ENCODE measurements at regions of chr19 and their contacts with region 1.

Region 1: DNA sequence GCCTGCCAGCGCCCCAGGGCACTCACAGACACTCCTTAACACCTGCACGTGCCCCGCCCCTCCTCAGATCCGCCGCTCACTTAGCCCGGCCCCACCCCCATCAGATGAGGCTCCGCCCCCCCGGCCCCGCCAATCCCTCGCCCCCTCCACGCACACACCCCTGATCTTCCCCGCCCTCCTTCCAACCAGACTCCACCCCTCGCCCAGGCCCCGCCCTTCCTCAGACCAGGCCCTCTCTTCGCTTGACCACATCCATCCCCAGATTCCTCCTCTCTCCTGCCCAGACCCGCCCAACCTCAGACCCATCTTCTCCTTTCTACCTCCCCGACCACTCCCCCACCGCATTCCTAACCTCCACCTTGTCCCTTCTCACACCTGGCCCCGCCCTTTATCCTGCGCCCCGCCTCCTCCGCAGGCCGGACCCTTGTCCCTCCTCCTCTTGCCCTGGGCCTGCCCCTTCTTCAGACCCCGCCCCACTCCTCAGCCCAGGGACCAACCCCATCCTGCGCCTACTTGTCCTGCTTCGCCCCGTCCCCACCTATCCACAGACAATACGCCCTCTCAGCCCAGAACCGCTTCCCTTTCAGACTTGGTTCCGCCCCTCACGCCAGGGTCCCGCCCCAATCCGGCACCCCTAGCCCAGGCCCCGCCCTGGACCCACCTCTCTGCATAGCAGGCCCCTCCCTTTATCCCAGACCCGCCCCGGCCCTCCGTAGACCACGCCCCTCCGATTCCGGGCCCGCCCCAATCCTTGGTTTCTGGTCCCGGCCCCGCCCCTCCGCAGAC is 452 bp upstream of the KLHL26 start:
- DNase-seq: peak; percentile 100
- H3K4me3 Mint-ChIP-seq: peak overlapping the region; percentile 81
- H3K27ac Mint-ChIP-seq: peak overlapping the region; percentile 57
- H3K4me1 Mint-ChIP-seq: peaks cover 23% of the 10 kb centered on the region
- H3K27me3 Mint-ChIP-seq: no peaks in the 10 kb centered on the region

Region 2: GRCh38 chr19:18571564-18572300 is 64.6 kb before region 1 on chr19 and contains the start of gene UBA52:
- CTCF ChIA-PET with region 1: no interaction called
- intact Hi-C with region 1: loop called (anchors 1 kb)
- DNase-seq: peak; percentile 99
- H3K4me3 Mint-ChIP-seq: peak within 1 kb of the TSS; percentile 90
- H3K27ac Mint-ChIP-seq: peak within 1 kb of the TSS; percentile 93
- H3K4me1 Mint-ChIP-seq: peaks cover 30% of the 10 kb centered on the region
- H3K27me3 Mint-ChIP-seq: no peaks in the 10 kb centered on the region
- total RNA-seq, gene UBA52: 1,997 to 2,122 TPM

Region 3: GRCh38 chr19:18683213-18683939 is 47.0 kb after region 1 on chr19 and contains the start of gene CRTC1:
- CTCF ChIA-PET with region 1: no interaction called
- intact Hi-C with region 1: loop called (anchors 2 kb)
- DNase-seq: peak; percentile 94
- H3K4me3 Mint-ChIP-seq: peak within 1 kb of the TSS; percentile 87
- H3K27ac Mint-ChIP-seq: peak within 1 kb of the TSS; percentile 84
- H3K4me1 Mint-ChIP-seq: peaks cover 18% of the 10 kb centered on the region
- H3K27me3 Mint-ChIP-seq: no peaks in the 10 kb centered on the region
- total RNA-seq, gene CRTC1: 4.0 to 4.2 TPM

Region 4: GRCh38 chr19:18700501-18701249 is 64.3 kb after region 1 on chr19:
- CTCF ChIA-PET with region 1: no interaction called
- intact Hi-C with region 1: loop called (anchors 1 kb)
- DNase-seq: peak; percentile 81
- H3K4me3 Mint-ChIP-seq: peak overlapping the region; percentile 53
- H3K27ac Mint-ChIP-seq: no peak overlapping the region
- H3K4me1 Mint-ChIP-seq: peaks cover 40% of the 10 kb centered on the region
- H3K27me3 Mint-ChIP-seq: no peaks in the 10 kb centered on the region

Region 5: DNA sequence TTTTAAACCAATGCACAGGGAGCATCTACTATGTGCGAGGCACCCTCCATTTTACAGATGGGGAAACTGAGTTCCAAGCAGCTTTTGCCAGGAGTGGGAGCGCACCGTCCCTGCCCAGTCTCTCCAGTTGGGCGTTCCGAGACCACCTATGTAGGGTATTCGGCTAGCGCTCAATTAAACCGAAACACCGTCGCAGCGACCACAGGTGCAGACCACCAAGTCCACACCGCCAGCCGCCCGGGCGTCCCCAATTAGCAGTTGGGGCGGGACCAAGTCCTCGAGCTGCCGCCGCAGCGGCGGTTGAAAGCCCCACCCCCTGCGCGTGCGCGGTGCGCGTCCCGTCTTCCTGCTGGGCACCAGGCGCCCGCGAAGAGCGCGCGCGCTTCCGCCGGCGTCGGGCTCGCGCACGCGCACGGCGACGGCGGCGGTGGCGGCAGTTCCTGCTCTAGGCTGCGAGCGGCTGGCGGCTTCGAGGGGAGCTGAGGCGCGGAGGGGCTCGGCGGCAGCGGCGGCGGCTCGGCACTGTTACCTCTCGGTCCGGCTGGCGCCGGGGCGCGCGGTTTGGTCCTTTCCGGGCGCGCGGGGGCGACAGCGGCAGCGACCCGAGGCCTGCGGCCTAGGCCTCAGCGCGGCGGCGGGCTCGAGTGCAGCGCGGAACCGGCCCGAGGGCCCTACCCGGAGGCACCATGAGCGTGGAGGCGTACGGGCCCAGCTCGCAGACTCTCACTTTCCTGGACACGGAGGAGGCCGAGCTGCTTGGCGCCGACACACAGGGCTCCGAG is 195.3 kb after region 1 on chr19 and contains the start of gene UPF1:
- CTCF ChIA-PET with region 1: no interaction called
- intact Hi-C with region 1: loop called (anchors 1 kb)
- DNase-seq: peak; percentile 96
- H3K4me3 Mint-ChIP-seq: peak within 1 kb of the TSS; percentile 97
- H3K27ac Mint-ChIP-seq: peak within 1 kb of the TSS; percentile 86
- H3K4me1 Mint-ChIP-seq: peaks cover 34% of the 10 kb centered on the region
- H3K27me3 Mint-ChIP-seq: no peaks in the 10 kb centered on the region
- total RNA-seq, gene UPF1: 95.0 to 105 TPM

Region 6: DNA sequence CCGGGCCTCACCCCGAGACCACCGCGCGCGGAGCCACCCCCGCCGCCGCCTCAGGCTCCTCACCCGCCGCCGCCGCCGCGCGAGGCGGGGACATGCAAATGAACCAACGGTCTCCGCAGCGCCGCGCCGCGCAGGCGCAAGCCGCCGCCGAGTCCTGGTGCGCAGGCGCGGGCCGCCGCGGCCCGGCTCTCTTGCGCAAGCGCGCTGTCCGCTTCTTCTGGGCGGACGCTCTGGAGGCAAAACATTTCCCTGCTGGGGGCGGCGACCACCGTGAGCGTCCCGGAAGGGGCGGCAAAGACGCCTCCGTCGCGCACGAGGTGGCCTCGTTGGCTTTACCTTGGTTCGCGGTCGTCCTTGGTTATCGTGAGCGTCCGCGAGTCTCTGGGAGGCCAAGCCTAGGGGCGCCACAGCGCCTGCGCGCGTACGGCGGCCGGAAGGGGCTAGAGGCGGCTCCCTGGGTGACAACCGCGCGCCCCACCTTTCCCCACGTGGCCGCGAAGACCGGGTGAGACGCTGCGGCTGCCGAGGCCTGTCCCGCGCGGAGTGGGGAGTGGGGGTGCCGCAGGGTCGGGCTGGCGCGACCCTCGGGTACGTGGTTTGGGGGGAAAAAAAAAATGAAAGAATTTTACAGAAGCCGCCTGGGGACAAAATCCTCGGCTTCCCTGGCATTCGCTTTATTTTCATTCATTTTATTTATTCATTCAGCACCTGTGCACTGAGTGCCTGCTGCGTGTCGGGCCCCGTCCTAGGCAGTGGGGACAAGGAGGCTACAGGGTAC is 397.2 kb after region 1 on chr19 and contains the starts of genes ARMC6 and SUGP2:
- CTCF ChIA-PET with region 1: no interaction called
- intact Hi-C with region 1: loop called (anchors 1 kb)
- DNase-seq: peak; percentile 85
- H3K4me3 Mint-ChIP-seq: peak within 1 kb of the TSS; percentile 95
- H3K27ac Mint-ChIP-seq: peak within 1 kb of the TSS; percentile 86
- H3K4me1 Mint-ChIP-seq: peaks cover 37% of the 10 kb centered on the region
- H3K27me3 Mint-ChIP-seq: no peaks in the 10 kb centered on the region
- total RNA-seq, gene ARMC6: 24.2 to 24.6 TPM
- total RNA-seq, gene SUGP2: 149 to 154 TPM

Region 7: GRCh38 chr19:19063183-19064097 is 427.1 kb after region 1 on chr19 and contains the start of gene SLC25A42:
- CTCF ChIA-PET with region 1: no interaction called
- intact Hi-C with region 1: loop called (anchors 1 kb)
- DNase-seq: peak; percentile 99
- H3K4me3 Mint-ChIP-seq: peak within 1 kb of the TSS; percentile 85
- H3K27ac Mint-ChIP-seq: peak within 1 kb of the TSS; percentile 83
- H3K4me1 Mint-ChIP-seq: peaks cover 41% of the 10 kb centered on the region
- H3K27me3 Mint-ChIP-seq: no peaks in the 10 kb centered on the region
- total RNA-seq, gene SLC25A42: 6.7 to 8.5 TPM